ENCODE measurements at regions of chr13 and their contacts with region 1.

Region 1: GRCh38 chr13:100514788-100515409 is 73.7 kb downstream of the GGACT start:
- DNase-seq: peak; percentile 37 to 74 (median 63)
- ATAC-seq: peak; percentile 94
- H3K4me3 ChIP-seq: no peak overlapping the region
- H3K4me3 Mint-ChIP-seq: no peak overlapping the region
- H3K27ac ChIP-seq: no peak overlapping the region
- H3K27ac Mint-ChIP-seq: peak overlapping the region in 1 of 9 donors; percentile 80
- H3K4me1 ChIP-seq: peaks cover 0 to 7% of the 10 kb centered on the region in 2 donors
- H3K4me1 Mint-ChIP-seq: peaks cover 0 to 30% (median 6%) of the 10 kb centered on the region in 7 donors
- H3K27me3 ChIP-seq: no peaks in the 10 kb centered on the region
- H3K27me3 Mint-ChIP-seq: peaks cover 0 to 4% (median 0%) of the 10 kb centered on the region in 5 donors

Region 2: GRCh38 chr13:99528547-99528946 is 986.4 kb before region 1 on chr13:
- CTCF ChIA-PET with region 1: interaction called, 9 read pairs
- POLR2A ChIA-PET with region 1: no interaction called
- intact Hi-C with region 1: loop called (anchors 1 to 10 kb)
- DNase-seq: peak in 6 of 9 donors; percentile 9 to 57 (median 48)
- ATAC-seq: peak; percentile 68
- H3K4me3 ChIP-seq: no peak overlapping the region
- H3K4me3 Mint-ChIP-seq: peak overlapping the region in 2 of 10 donors; percentile 12 to 25
- H3K27ac ChIP-seq: no peak overlapping the region
- H3K27ac Mint-ChIP-seq: no peak overlapping the region
- H3K4me1 ChIP-seq: peaks cover 8 to 17% of the 10 kb centered on the region in 2 donors
- H3K4me1 Mint-ChIP-seq: peaks cover 33 to 63% (median 47%) of the 10 kb centered on the region in 7 donors
- H3K27me3 ChIP-seq: no peaks in the 10 kb centered on the region
- H3K27me3 Mint-ChIP-seq: no peaks in the 10 kb centered on the region

Region 3: DNA sequence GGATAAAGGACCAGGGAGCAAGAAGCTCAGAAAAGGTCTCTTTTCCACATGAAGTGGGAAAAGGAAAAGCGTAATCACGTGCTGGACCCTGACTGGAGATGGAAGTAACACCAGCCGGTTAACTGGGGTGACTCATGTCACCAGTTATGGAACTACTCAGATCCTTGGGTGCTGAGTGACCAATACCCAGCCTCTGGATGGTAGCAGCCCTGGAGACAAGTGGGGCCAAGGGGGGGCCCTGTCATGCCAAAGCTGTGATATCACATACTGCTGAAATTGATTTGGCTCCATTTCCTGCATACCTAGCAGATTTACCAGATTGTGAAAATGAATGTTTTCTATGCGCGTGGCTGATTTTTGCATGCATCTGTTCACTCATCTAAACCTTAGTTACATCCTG is 702.3 kb before region 1 on chr13:
- CTCF ChIA-PET with region 1: no interaction called
- POLR2A ChIA-PET with region 1: no interaction called
- intact Hi-C with region 1: no loop called
- DNase-seq: no peak
- ATAC-seq: no peak
- H3K4me3 ChIP-seq: no peak overlapping the region
- H3K4me3 Mint-ChIP-seq: no peak overlapping the region
- H3K27ac ChIP-seq: no peak overlapping the region
- H3K27ac Mint-ChIP-seq: no peak overlapping the region
- H3K4me1 ChIP-seq: peaks cover under 1 to 2% of the 10 kb centered on the region in 2 donors
- H3K4me1 Mint-ChIP-seq: peaks cover 3 to 15% (median 11%) of the 10 kb centered on the region in 7 donors
- H3K27me3 ChIP-seq: no peaks in the 10 kb centered on the region
- H3K27me3 Mint-ChIP-seq: peaks cover 0 to 3% (median 0%) of the 10 kb centered on the region in 5 donors

Region 4: GRCh38 chr13:99900960-99901359 is 613.9 kb before region 1 on chr13:
- CTCF ChIA-PET with region 1: interaction called, 3 read pairs
- POLR2A ChIA-PET with region 1: no interaction called
- intact Hi-C with region 1: loop called in 1 of 2 experiments (anchors 1 kb)
- DNase-seq: no peak
- ATAC-seq: no peak
- H3K4me3 ChIP-seq: no peak overlapping the region
- H3K4me3 Mint-ChIP-seq: no peak overlapping the region
- H3K27ac ChIP-seq: no peak overlapping the region
- H3K27ac Mint-ChIP-seq: no peak overlapping the region
- H3K4me1 ChIP-seq: peaks cover 0 to 7% of the 10 kb centered on the region in 2 donors
- H3K4me1 Mint-ChIP-seq: peaks cover 0 to 9% (median 5%) of the 10 kb centered on the region in 7 donors
- H3K27me3 ChIP-seq: peaks cover 6 to 20% of the 10 kb centered on the region in 2 donors
- H3K27me3 Mint-ChIP-seq: peaks cover 52 to 71% (median 63%) of the 10 kb centered on the region in 5 donors

Region 5: GRCh38 chr13:99916366-99917103 is 598.4 kb before region 1 on chr13:
- CTCF ChIA-PET with region 1: interaction called, 7 read pairs
- POLR2A ChIA-PET with region 1: no interaction called
- intact Hi-C with region 1: loop called (anchors 1 kb)
- DNase-seq: peak in 6 of 9 donors; percentile 18 to 62 (median 50)
- ATAC-seq: peak; percentile 85
- H3K4me3 ChIP-seq: no peak overlapping the region
- H3K4me3 Mint-ChIP-seq: no peak overlapping the region
- H3K27ac ChIP-seq: no peak overlapping the region
- H3K27ac Mint-ChIP-seq: peak overlapping the region in 1 of 9 donors; percentile 3
- H3K4me1 ChIP-seq: peaks cover 0 to 8% of the 10 kb centered on the region in 2 donors
- H3K4me1 Mint-ChIP-seq: peaks cover 5 to 31% (median 7%) of the 10 kb centered on the region in 7 donors
- H3K27me3 ChIP-seq: no peaks in the 10 kb centered on the region
- H3K27me3 Mint-ChIP-seq: peaks cover 3 to 21% (median 5%) of the 10 kb centered on the region in 5 donors

Region 6: DNA sequence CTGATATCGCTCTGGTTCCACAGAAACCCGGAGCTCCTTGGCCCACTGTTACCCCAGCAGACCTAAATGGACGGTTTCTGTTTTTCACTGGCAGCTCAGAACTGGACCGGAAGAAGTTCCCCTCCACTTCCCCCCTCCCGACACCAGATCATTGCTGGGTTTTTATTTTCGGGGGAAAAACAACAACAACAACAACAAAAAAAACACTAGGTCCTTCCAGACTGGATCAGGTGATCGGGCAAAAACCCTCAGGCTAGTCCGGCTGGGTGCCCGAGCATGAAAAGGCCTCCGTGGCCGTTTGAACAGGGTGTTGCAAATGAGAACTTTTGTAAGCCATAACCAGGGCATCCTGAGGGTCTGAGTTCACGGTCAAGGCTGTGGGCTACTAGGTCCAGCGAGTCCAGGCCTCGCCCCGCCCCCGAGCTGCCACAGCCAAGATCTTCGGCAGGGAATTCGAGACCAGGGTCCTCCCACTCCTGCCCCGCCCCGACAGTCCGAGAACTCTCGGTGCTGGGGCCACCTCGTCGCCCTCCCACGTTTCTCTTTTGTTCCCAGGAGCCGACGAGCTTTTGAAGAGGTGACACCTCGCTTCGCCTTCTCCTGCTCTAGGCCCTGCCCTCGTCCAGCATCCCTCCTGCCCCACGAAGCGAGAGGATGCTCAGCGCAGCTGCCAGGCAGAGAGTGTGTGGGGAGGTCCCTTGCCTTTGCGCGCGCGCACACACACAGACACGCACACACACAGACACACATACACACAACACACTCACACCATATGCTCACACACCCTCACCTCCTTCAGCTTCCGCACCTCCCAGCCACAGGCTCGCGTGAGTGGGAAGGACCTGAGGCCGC is 524.5 kb before region 1 on chr13:
- CTCF ChIA-PET with region 1: no interaction called
- POLR2A ChIA-PET with region 1: no interaction called
- intact Hi-C with region 1: loop called in 1 of 2 experiments (anchors 2 kb)
- DNase-seq: peak in 1 of 9 donors; percentile 19
- ATAC-seq: no peak
- H3K4me3 ChIP-seq: no peak overlapping the region
- H3K4me3 Mint-ChIP-seq: peak overlapping the region in 9 of 10 donors; percentile 23 to 64 (median 49)
- H3K27ac ChIP-seq: no peak overlapping the region
- H3K27ac Mint-ChIP-seq: peak overlapping the region in 3 of 9 donors; percentile 25 to 46 (median 34)
- H3K4me1 ChIP-seq: peaks cover 6 to 25% of the 10 kb centered on the region in 2 donors
- H3K4me1 Mint-ChIP-seq: peaks cover 4 to 36% (median 25%) of the 10 kb centered on the region in 7 donors
- H3K27me3 ChIP-seq: peaks cover 45 to 96% of the 10 kb centered on the region in 2 donors
- H3K27me3 Mint-ChIP-seq: peaks cover 73 to 96% (median 94%) of the 10 kb centered on the region in 5 donors

Region 7: GRCh38 chr13:100039740-100040139 is 475.2 kb before region 1 on chr13:
- CTCF ChIA-PET with region 1: no interaction called
- POLR2A ChIA-PET with region 1: no interaction called
- intact Hi-C with region 1: loop called in 1 of 2 experiments (anchors 2 kb)
- DNase-seq: no peak
- ATAC-seq: no peak
- H3K4me3 ChIP-seq: no peak overlapping the region
- H3K4me3 Mint-ChIP-seq: no peak overlapping the region
- H3K27ac ChIP-seq: no peak overlapping the region
- H3K27ac Mint-ChIP-seq: no peak overlapping the region
- H3K4me1 ChIP-seq: no peaks in the 10 kb centered on the region
- H3K4me1 Mint-ChIP-seq: no peaks in the 10 kb centered on the region
- H3K27me3 ChIP-seq: no peaks in the 10 kb centered on the region
- H3K27me3 Mint-ChIP-seq: peaks cover 0 to 7% (median 5%) of the 10 kb centered on the region in 5 donors

Measured in naive thymus-derived CD4-positive, alpha-beta T cell (primary cell).